GM10248 (cell line): ENCODE measurements at regions of chr2 and their contacts with region 1.

Region 1: DNA sequence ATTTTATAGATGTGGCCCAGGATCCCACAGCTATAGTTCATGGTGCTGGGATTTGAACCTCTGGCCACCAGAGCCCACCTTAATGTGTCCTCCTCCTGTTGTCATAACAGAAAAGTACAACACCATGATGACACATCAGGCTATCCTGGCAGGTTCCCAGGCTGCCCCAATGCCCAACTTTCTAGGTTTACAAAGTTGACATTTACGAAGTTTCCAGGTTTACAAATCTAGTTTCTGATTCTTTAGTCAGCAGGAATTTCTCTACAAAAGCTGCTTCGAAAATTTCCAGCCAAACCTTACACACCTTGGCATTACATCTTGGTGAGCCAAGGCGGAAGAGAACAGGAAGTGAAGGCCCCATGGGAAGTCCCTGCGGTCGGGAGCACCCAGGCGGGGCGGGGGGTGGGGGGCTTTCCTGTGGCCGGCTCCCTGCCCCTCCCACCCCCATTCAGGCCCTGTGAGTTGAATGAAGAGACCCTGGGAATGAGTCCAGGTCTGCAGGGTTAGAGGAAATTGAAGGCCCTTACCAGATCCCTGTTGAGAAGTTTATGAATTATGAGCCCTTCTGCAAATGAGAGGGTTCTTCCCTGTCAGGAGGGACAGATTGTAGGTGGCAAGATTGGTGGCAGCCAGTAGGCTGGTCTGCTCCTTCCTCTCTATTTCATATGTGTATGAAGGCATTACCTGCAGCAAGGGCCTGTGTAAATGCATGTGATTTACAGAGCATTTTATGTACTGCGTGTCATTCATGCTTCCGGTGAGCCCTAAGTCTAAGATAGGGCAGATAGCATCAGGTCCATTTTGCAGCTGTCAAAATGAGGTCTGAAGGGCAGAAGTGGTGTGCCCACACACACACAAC is 11.1 kb upstream of the IL1RN start:
- DNase-seq: peak; percentile 21
- CTCF ChIP-seq: no peak

Region 2: DNA sequence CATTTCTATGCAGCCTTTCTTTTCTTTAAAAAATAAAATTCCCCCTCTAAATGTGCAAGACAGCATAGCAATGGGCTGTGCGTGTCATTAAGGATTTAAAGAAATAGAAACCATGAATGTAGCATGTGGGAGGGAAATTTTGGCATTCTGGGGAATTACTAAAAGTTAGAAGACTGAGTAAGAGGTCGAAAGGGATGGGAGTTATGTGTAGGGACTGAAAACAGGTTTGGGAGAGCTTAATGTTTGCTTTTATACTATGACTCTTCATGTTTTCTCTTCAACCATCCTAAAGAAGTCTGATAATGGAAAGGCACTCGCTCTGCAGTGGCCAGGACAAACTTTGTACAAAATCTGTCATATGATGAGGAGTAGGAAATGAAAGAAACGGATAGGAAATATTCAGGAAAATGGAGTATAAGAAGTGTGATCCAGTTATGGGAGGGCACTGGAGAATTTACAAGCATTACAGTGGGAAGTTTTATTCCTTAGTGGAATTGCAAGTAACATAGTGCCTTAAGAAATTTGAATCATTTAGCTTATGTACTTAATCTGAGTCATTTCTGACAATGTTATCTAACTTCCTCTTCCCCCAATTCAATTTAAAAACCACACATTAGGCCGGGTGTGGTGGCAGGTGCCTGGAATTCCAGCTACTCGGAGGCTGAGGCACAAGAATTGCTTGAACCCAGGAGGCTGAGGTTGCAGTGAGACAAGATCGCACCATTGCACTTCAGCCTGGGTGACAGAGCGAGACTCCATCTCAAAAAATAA is 1040.7 kb before region 1 on chr2:
- CTCF ChIA-PET with region 1: no interaction called
- POLR2A ChIA-PET with region 1: no interaction called
- DNase-seq: no peak
- CTCF ChIP-seq: no peak

Region 3: DNA sequence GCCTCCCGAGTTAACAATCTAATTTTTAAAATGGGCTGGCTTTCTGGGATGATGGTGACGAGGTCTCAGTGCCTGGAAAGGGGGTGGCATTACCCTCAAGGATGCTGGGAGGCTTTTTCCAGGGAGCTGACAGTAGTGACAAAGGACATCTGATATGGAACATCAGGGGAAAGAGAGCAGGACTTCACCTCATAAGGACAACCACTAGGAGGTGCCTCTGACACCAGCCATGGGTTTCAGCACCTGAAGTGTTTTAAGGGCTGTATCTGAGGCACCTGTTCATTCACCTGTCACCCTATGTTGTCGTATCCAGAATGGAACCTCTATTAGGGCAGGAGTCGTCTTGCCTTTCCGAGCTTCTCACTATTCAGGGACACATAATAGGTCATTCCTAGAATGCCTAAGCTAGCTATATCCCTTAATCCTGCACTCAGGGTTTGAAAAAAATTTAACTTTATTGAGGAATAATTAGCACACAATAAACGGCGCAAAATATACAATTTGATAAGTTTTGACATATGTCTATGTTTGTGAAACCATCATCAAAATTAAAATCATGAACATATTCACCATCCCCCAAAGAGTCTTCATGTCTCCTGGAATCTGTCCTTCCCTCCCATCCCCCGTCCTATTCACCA is 74.3 kb before region 1 on chr2:
- CTCF ChIA-PET with region 1: no interaction called
- POLR2A ChIA-PET with region 1: no interaction called
- DNase-seq: no peak
- CTCF ChIP-seq: no peak

Region 4: DNA sequence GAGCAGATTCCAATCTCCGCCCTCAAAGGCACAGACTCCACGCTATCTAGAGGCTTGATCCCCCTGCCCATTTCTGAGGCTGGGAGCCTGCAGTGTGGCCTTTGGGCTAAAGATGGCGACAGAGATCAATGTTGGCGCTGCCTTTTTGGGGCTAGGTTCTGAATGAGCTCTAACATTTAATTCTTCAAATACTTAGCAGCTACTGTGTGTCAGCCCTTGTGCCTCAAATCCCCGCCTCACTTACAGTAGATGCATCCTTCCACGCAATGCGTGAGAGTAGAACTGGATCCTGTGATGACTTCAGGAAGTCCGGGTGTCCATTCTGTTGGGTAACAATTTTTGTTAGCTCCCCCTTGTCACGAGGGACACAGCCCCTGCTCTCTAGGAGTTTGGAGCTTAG is 36.2 kb before region 1 on chr2:
- CTCF ChIA-PET with region 1: interaction called, 13 read pairs
- POLR2A ChIA-PET with region 1: no interaction called
- DNase-seq: peak; percentile 57
- CTCF ChIP-seq: peak; percentile 84